ENCODE measurements at regions of chr2 and their contacts with region 1.

Region 1: DNA sequence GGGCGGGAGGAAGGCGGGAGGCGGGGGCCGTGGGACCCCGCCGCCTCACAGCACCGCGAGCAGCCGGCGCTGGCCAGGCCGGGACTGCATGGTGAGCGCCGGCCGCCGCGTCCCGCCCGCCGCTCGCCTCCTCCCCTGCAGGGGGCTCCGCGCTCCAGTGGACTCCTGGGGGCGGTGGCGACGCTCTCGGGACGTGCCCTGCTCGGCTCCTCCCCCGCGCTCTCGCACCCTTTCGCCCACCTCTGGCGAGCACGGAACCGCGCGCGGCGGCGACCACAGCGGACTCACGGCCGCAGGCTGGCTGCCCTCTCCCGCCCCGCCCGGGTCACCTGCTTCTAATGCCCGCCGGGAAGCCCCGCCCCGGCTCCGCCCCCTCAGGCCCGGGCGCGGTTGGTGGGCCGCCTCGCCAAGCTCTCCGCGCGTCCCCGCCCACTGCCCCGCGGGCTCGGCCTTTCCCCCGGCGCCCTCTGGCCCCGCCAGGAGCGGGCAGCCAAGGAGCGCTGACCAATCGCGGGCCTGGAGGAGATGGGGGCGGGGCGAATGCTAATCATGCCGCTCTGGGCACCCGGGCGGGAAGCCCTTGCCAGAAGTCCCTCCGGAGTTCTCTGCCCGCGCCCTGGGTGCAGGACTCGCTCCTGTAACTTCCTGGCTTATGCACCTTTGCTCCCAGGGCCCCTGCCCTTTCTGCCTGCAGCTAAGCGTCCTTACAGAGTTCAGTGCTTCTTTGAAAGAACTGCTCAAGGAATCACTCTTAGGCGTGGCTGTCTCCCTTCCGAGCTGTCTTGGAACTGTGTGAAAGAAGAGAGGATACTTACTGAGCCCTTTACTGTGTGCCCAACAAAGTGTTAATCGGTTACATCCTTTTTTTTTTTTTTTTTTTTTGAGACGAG is at the start of gene FZD5:
- DNase-seq: peak in 1 of 2 donors; percentile 95
- H3K4me3 ChIP-seq: peak within 1 kb of the TSS; percentile 88 to 98
- H3K27ac ChIP-seq: peak within 1 kb of the TSS; percentile 85
- H3K4me1 ChIP-seq: peaks cover 29% of the 10 kb centered on the region
- H3K27me3 ChIP-seq: no peaks in the 10 kb centered on the region
- CTCF ChIP-seq: peak in 2 of 3 experiments; percentile 17 to 27
- POLR2A ChIP-seq: peak; percentile 62 to 77
- total RNA-seq, gene FZD5: 9.3 TPM

Region 2: DNA sequence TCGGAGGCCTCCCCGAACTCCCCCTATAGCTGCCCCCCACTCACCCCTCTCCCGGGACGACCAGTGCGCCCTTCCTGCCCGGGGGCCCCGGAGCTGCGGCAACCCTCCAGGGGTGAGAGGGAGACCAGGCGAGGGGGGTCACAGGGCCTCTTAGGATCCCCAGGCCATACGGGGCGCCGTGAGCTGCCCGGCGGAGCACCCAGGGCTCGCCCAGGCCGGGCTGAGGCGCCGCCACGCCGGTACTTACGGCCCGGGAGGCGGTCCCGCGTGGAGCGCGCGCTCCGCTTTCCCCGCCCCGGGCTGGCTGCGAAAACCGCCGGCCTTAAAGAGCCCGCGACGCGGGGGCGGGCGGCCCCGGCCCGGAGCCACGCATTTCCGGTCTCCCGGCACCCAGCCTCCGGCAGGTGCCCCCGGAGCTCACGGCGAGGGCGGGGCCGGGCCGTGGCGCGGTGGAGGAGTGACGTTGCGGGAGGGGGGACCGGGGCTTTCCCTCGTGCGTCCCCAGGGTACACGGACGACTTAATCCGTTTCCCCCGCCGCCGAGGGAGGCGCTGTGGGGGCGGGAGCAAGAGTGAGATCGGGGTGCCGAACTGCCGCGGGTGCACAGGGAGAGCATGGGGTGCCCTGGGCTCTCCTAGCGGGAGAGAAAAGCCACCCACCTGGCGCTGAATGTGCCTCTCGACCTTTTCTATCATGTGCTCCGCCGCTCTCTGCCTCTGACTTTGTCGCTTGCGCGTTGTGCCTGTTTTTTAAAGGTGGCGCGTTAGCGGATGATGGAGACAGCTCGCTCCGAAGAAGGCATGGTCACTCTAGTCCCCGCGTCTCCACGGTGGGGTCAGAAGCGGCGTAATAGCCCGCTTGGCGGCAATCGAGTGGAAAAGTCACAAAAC is 144.6 kb before region 1 on chr2 and contains the start of gene METTL21A:
- intact Hi-C with region 1: loop called (anchors 10 kb)
- DNase-seq: no peak
- H3K4me3 ChIP-seq: peak within 1 kb of the TSS; percentile 64 to 82
- H3K27ac ChIP-seq: peak within 1 kb of the TSS; percentile 96
- H3K4me1 ChIP-seq: peaks cover 29% of the 10 kb centered on the region
- H3K27me3 ChIP-seq: no peaks in the 10 kb centered on the region
- CTCF ChIP-seq: peak in 2 of 3 experiments; percentile 14 to 33
- POLR2A ChIP-seq: peak in 1 of 2 donors; percentile 57
- total RNA-seq, gene METTL21A: 7.6 TPM

Region 3: DNA sequence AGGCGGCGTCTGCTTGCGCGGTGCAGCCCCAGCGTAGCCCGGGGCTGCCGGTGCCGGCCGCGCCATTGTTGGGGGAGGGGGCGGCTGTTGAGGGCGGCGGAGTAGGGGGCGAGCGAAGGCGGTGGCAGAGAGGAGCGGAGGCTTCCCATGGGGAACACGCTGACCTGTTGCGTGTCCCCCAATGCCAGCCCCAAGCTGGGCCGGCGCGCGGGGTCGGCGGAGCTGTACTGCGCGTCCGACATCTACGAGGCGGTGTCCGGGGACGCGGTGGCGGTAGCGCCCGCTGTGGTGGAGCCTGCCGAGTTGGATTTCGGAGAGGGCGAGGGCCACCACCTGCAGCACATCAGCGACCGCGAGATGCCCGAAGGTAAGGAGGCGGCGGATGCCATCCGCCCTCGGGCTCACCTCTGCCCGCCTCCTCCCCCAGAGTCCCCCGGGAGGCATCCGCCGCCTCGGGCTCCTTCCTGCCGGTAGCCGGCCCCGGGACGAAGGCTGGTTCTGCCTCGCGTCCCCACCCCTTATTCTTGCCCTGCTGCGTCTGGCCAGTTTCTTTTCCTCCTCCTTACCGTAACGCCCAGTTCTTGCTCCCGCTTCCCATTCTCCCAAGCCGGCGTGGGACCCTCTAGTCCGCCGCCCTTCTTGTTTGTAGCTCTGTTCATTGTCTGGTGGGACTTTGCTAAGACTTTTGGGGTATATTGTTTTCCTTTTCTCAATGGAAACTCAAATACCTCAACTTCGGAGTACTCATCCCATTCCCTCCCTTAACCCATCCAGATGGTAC is 57.9 kb before region 1 on chr2:
- intact Hi-C with region 1: loop called (anchors 1 kb)
- DNase-seq: peak in 1 of 2 donors; percentile 89
- H3K4me3 ChIP-seq: peak overlapping the region; percentile 85 to 91
- H3K27ac ChIP-seq: peak overlapping the region; percentile 82
- H3K4me1 ChIP-seq: peaks cover 20% of the 10 kb centered on the region
- H3K27me3 ChIP-seq: no peaks in the 10 kb centered on the region
- CTCF ChIP-seq: no peak
- POLR2A ChIP-seq: no peak

Measured in vagina (tissue), 2 donors.